Naive thymus-derived CD4-positive, alpha-beta T cell (primary cell): ENCODE measurements at regions of chr17 and their contacts with region 1.

Region 1: GRCh38 chr17:62968445-62968923 is 2.4 kb downstream of the TANC2 start:
- DNase-seq: peak in 8 of 9 donors; percentile 30 to 81 (median 73)
- ATAC-seq: peak; percentile 63
- H3K4me3 ChIP-seq: no peak overlapping the region
- H3K4me3 Mint-ChIP-seq: peak overlapping the region; percentile 38 to 75 (median 64)
- H3K27ac ChIP-seq: no peak overlapping the region
- H3K27ac Mint-ChIP-seq: peak overlapping the region in 4 of 9 donors; percentile 14 to 65 (median 24)
- H3K4me1 ChIP-seq: peaks cover 14 to 15% of the 10 kb centered on the region in 2 donors
- H3K4me1 Mint-ChIP-seq: peaks cover 24 to 42% (median 30%) of the 10 kb centered on the region in 7 donors
- H3K27me3 ChIP-seq: no peaks in the 10 kb centered on the region
- H3K27me3 Mint-ChIP-seq: peaks cover 0 to 56% (median 0%) of the 10 kb centered on the region in 5 donors

Region 2: GRCh38 chr17:61412143-61412859 is 1556.2 kb before region 1 on chr17:
- CTCF ChIA-PET with region 1: no interaction called
- POLR2A ChIA-PET with region 1: no interaction called
- intact Hi-C with region 1: loop called in 1 of 2 experiments (anchors 5 kb)
- DNase-seq: peak; percentile 59 to 91 (median 81)
- ATAC-seq: peak; percentile 88
- H3K4me3 ChIP-seq: peak overlapping the region; percentile 64
- H3K4me3 Mint-ChIP-seq: peak overlapping the region in 9 of 10 donors; percentile 56 to 85 (median 76)
- H3K27ac ChIP-seq: peak overlapping the region; percentile 37
- H3K27ac Mint-ChIP-seq: no peak overlapping the region
- H3K4me1 ChIP-seq: peaks cover 7 to 15% of the 10 kb centered on the region in 2 donors
- H3K4me1 Mint-ChIP-seq: peaks cover 12 to 31% (median 23%) of the 10 kb centered on the region in 7 donors
- H3K27me3 ChIP-seq: peaks cover 0 to 23% of the 10 kb centered on the region in 2 donors
- H3K27me3 Mint-ChIP-seq: peaks cover 22 to 59% (median 28%) of the 10 kb centered on the region in 5 donors

Region 3: GRCh38 chr17:62065598-62066468 is 902.7 kb before region 1 on chr17:
- CTCF ChIA-PET with region 1: no interaction called
- POLR2A ChIA-PET with region 1: no interaction called
- intact Hi-C with region 1: loop called in 1 of 2 experiments (anchors 5 kb)
- DNase-seq: peak; percentile 91 to 97 (median 96)
- ATAC-seq: peak; percentile 97
- H3K4me3 ChIP-seq: peak overlapping the region; percentile 88
- H3K4me3 Mint-ChIP-seq: peak overlapping the region; percentile 93 to 99 (median 96)
- H3K27ac ChIP-seq: peak overlapping the region; percentile 100
- H3K27ac Mint-ChIP-seq: peak overlapping the region; percentile 92 to 100 (median 96)
- H3K4me1 ChIP-seq: peaks cover 16 to 23% of the 10 kb centered on the region in 2 donors
- H3K4me1 Mint-ChIP-seq: peaks cover 24 to 40% (median 34%) of the 10 kb centered on the region in 7 donors
- H3K27me3 ChIP-seq: no peaks in the 10 kb centered on the region
- H3K27me3 Mint-ChIP-seq: no peaks in the 10 kb centered on the region

Region 4: DNA sequence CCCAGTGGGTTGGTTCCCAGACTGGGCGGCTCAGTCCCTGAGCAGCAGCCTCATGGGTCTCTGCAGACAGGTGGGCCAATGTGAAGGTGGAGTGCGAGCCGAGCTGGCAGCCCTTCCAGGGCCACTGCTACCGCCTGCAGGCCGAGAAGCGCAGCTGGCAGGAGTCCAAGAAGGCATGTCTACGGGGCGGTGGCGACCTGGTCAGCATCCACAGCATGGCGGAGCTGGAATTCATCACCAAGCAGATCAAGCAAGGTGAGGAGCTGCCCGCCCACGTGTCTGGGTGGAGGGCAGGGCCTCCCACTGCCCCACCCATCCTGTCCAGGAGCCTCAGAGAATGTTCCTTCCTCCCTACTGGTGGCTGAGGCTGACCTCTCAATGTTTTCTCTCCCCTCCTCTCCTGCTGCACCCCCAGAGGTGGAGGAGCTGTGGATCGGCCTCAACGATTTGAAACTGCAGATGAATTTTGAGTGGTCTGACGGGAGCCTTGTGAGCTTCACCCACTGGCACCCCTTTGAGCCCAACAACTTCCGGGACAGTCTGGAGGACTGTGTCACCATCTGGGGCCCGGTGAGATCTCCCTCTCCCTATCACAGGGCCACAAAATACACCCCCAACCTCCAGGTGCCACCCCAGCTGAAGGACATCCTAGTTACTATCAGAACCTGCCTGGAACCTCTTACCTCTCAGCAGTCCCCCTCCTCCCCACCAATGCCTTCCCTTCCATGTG is 296.7 kb before region 1 on chr17:
- CTCF ChIA-PET with region 1: interaction called, 3 read pairs
- POLR2A ChIA-PET with region 1: no interaction called
- intact Hi-C with region 1: loop called (anchors 1 kb)
- DNase-seq: no peak
- ATAC-seq: no peak
- H3K4me3 ChIP-seq: no peak overlapping the region
- H3K4me3 Mint-ChIP-seq: no peak overlapping the region
- H3K27ac ChIP-seq: no peak overlapping the region
- H3K27ac Mint-ChIP-seq: peak overlapping the region in 2 of 9 donors; percentile 1 to 36
- H3K4me1 ChIP-seq: no peaks in the 10 kb centered on the region
- H3K4me1 Mint-ChIP-seq: peaks cover 0 to 5% (median 3%) of the 10 kb centered on the region in 7 donors
- H3K27me3 ChIP-seq: no peaks in the 10 kb centered on the region
- H3K27me3 Mint-ChIP-seq: no peaks in the 10 kb centered on the region

Region 5: GRCh38 chr17:62892870-62893338 is 75.6 kb before region 1 on chr17:
- CTCF ChIA-PET with region 1: no interaction called
- POLR2A ChIA-PET with region 1: interaction called, 3 read pairs
- intact Hi-C with region 1: loop called in 1 of 2 experiments (anchors 5 kb)
- DNase-seq: peak in 1 of 9 donors; percentile 1
- ATAC-seq: peak; percentile 86
- H3K4me3 ChIP-seq: no peak overlapping the region
- H3K4me3 Mint-ChIP-seq: no peak overlapping the region
- H3K27ac ChIP-seq: no peak overlapping the region
- H3K27ac Mint-ChIP-seq: peak overlapping the region in 3 of 9 donors; percentile 5 to 87 (median 51)
- H3K4me1 ChIP-seq: no peaks in the 10 kb centered on the region
- H3K4me1 Mint-ChIP-seq: peaks cover 0 to 12% (median 8%) of the 10 kb centered on the region in 7 donors
- H3K27me3 ChIP-seq: no peaks in the 10 kb centered on the region
- H3K27me3 Mint-ChIP-seq: peaks cover 1 to 14% (median 3%) of the 10 kb centered on the region in 5 donors

Region 6: DNA sequence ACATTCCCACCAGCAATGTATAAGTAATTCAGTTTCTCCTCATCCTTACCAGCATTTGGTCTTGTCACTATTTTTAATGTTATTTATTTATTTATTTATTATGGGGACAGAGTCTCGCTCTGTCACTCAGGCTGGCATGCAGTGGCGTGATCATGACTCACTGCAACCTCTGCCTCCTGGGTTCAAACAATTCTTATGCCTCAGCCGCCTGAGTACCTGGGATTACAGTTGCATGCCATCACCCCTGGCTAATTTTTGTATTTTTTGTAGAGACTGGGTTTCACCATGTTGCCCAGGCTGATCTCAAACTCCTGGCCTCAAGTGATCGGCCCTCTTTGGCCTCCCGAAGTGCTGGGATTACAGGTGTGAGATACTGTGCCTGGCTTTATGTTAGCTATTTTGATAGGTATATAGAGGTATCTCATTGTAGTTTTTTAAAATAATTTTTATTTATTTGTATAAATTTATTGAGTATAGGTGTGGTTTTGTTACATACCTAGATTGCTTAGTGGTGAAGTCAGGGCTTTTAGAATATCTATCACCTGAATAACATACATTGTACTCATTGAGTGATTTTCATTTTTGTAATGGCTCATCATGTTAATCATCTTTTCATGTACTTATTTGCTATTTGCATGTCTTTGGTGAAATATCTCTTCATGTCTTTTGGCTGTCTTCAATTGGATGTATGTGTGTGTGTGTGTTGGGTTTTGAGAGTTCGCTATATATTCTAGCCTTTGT is 50.8 kb after region 1 on chr17:
- CTCF ChIA-PET with region 1: no interaction called
- POLR2A ChIA-PET with region 1: no interaction called
- intact Hi-C with region 1: no loop called
- DNase-seq: no peak
- ATAC-seq: no peak
- H3K4me3 ChIP-seq: no peak overlapping the region
- H3K4me3 Mint-ChIP-seq: no peak overlapping the region
- H3K27ac ChIP-seq: no peak overlapping the region
- H3K27ac Mint-ChIP-seq: no peak overlapping the region
- H3K4me1 ChIP-seq: no peaks in the 10 kb centered on the region
- H3K4me1 Mint-ChIP-seq: peaks cover 0 to 6% (median 0%) of the 10 kb centered on the region in 7 donors
- H3K27me3 ChIP-seq: no peaks in the 10 kb centered on the region
- H3K27me3 Mint-ChIP-seq: no peaks in the 10 kb centered on the region

Region 7: GRCh38 chr17:63124536-63124935 is 156.1 kb after region 1 on chr17:
- CTCF ChIA-PET with region 1: no interaction called
- POLR2A ChIA-PET with region 1: no interaction called
- intact Hi-C with region 1: no loop called
- DNase-seq: no peak
- ATAC-seq: no peak
- H3K4me3 ChIP-seq: no peak overlapping the region
- H3K4me3 Mint-ChIP-seq: no peak overlapping the region
- H3K27ac ChIP-seq: no peak overlapping the region
- H3K27ac Mint-ChIP-seq: no peak overlapping the region
- H3K4me1 ChIP-seq: no peaks in the 10 kb centered on the region
- H3K4me1 Mint-ChIP-seq: no peaks in the 10 kb centered on the region
- H3K27me3 ChIP-seq: no peaks in the 10 kb centered on the region
- H3K27me3 Mint-ChIP-seq: no peaks in the 10 kb centered on the region

Region 8: GRCh38 chr17:63621766-63622519 is 653.5 kb after region 1 on chr17 and contains the start of gene MAP3K3:
- CTCF ChIA-PET with region 1: no interaction called
- POLR2A ChIA-PET with region 1: no interaction called
- intact Hi-C with region 1: loop called in 1 of 2 experiments (anchors 5 kb)
- DNase-seq: peak; percentile 79 to 99 (median 98)
- ATAC-seq: peak; percentile 93
- H3K4me3 ChIP-seq: peak within 1 kb of the TSS; percentile 82
- H3K4me3 Mint-ChIP-seq: peak within 1 kb of the TSS; percentile 96 to 100 (median 99)
- H3K27ac ChIP-seq: peak within 1 kb of the TSS; percentile 75
- H3K27ac Mint-ChIP-seq: peak within 1 kb of the TSS; percentile 83 to 97 (median 95)
- H3K4me1 ChIP-seq: peaks cover 21 to 31% of the 10 kb centered on the region in 2 donors
- H3K4me1 Mint-ChIP-seq: peaks cover 34 to 48% (median 42%) of the 10 kb centered on the region in 7 donors
- H3K27me3 ChIP-seq: peaks cover 0 to 3% of the 10 kb centered on the region in 2 donors
- H3K27me3 Mint-ChIP-seq: peaks cover 0 to 12% (median 0%) of the 10 kb centered on the region in 5 donors
- total RNA-seq, gene MAP3K3: 37.5 to 105 (median 85.5) TPM